ENCODE measurements at regions of chr6 and their contacts with region 1.

Region 1: DNA sequence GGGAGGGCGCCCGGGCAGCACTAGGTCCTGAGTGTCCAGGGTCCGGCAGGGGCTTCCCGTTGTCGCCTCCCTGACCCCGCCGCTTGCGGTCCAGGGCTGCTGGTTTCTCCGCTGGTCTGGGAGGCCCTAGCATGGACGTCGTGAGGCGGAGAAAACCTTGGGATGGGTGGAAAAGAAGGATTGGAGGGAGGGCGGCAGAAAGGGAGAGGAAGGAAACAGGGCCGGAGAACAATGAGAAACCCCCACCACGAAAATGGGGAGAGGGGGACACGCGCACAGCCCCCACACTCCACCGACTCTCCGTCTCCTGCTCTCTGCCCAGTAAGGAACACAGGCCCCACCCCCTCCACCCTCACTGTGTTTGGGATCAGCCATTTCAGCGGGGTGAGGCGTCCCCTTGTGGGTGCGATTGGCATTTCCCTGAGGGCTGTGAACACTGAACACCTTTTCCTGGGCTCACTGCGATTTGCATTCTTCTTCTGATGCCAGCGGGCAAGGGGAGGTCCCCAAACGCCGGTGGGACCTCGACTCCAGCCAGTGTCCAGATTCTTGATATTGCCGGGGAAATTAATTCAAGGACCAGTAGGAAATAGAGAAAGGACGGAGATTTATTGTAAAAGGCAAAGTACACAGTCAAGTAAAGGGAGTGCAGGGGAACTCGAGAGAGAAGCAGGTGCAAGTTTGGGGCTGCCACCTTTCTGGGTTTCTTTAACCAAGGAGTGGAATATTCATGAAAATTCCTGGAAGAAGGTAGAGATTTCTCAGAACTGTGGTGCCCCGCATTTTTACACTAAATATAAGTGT is 3.3 kb upstream of the RAET1G start:
- DNase-seq: peak; percentile 97
- H3K4me3 ChIP-seq: peak overlapping the region; percentile 42
- H3K27ac ChIP-seq: no peak overlapping the region
- H3K4me1 ChIP-seq: no peaks in the 10 kb centered on the region
- H3K27me3 ChIP-seq: peaks cover 10% of the 10 kb centered on the region
- CTCF ChIP-seq: peak; percentile 87

Region 2: DNA sequence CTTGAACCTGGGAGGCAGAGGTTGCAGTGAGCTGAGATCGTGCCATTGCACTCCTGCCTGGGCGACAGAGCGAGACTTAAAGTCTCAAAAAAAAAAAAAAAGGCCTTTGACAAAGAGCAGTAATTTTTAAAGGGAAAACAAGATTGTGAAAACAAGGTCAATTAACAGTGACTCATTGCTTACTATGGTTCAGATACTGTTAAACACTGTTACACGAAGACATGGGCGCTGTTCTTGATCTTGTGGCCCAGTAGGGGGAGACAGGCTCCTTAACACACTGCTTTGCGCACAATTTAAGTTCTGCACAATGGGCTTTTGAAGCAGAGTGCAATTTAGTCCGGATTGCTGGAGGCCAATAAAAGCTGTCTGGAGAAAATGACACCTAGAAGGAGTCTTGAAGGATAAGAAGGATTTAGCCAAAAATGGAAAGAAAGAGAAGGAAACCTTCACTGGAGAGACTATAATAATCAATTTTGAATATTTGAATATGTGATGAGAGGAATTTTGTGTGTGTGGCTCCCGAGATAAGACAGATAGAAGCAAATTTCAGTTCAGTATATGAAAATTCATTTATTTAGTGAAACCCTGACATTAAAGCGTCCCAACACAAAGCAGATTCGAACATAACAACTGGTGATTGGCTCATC is 202.3 kb before region 1 on chr6:
- intact Hi-C with region 1: loop called (anchors 5 kb)
- DNase-seq: peak; percentile 53
- H3K4me3 ChIP-seq: no peak overlapping the region
- H3K27ac ChIP-seq: no peak overlapping the region
- H3K4me1 ChIP-seq: no peaks in the 10 kb centered on the region
- H3K27me3 ChIP-seq: no peaks in the 10 kb centered on the region
- CTCF ChIP-seq: peak; percentile 75